ENCODE measurements at regions of chr16 and their contacts with region 1.

Region 1: DNA sequence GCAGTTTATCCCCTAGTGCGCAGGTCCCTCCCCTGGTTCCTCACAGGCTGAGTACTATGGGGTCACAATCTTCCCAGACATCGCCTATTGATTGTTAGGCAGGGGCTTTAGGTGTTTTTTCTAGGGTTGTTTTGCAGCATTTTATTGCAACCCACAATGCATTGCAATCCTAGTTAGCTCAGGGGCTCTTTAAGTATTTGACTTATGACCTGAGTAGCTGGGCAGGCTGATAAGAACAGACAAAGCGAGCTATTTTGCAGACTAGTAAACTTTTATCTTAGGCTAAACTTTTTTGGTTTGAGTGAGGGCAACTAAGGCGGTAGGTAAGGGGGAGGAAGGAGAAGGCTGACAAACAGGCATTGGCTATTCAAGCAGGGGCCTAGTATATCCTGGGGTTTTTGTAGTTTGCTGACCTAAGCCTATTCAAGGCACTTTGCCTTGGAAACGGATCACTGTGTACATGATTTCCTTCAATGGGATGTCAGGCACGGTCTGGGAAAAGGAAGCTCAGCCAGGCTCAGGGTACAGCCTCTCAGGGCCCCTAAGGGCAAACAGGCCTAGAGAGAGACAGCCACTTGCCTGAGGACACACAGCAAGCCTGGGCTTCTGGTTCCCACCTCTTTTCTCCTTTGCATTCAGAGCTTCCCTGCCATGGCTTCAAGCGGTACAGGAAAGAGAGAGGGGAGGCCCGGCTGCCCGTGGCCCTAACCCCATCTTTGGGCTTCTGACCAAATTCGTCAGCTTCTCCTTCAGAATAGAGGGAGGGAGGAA is 6.4 kb downstream of the DRC7 start:
- DNase-seq: peak; percentile 81
- ATAC-seq: peak; percentile 58
- H3K4me3 ChIP-seq: peak overlapping the region in 2 of 3 experiments; percentile 11 to 49; a peak in 3 of 6 replicates
- H3K27ac ChIP-seq: peak overlapping the region; percentile 72
- H3K4me1 ChIP-seq: peaks cover 87% of the 10 kb centered on the region
- H3K27me3 ChIP-seq: no peaks in the 10 kb centered on the region
- CTCF ChIP-seq: no peak
- EP300 ChIP-seq: no peak
- POLR2A ChIP-seq: no peak
- RAD21 ChIP-seq: no peak

Region 2: DNA sequence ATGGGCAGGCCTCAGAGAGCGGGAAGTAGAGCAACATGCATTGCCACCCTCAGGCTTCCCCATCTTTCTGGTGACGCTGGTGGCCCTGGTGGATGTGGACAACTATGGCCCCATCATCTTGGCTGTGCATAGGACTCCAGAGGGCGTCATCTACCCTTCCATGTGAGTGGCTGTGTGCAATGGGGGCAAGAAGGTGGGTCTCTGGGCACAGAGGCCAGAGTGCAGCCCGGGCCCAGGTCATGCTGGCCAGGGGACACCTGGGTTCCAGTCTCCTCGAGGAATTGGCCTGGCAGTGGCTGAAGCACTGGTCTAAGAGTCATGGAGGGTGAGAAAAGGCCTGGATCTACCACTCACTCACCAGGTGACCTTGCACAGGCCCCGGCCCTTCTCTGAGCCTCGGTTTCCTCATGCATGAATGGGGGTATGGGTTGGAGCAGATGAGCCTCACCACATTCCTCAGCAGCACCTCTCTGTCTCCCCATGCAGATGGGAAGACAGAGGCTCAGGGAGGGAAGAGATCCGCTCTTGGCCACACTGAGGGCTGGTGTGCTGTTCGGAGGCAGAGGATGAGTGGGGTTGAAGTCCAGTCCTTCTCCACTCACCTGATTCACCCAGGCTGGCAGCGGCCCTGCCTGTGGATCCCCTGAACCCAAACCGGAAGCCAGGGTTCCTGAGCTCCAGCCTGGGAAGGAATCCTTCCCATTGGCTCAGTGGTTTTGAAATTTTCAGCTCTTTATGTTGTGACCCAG is 40.1 kb before region 1 on chr16:
- CTCF ChIA-PET with region 1: no interaction called
- POLR2A ChIA-PET with region 1: interaction called, 9 read pairs
- in situ Hi-C with region 1: no loop called
- intact Hi-C with region 1: loop called (anchors 2 kb)
- DNase-seq: peak; percentile 59
- ATAC-seq: peak; percentile 86
- H3K4me3 ChIP-seq: peak overlapping the region in 1 of 3 experiments; percentile 17; a peak in 1 of 6 replicates
- H3K27ac ChIP-seq: peak overlapping the region; percentile 52
- H3K4me1 ChIP-seq: peaks cover 36% of the 10 kb centered on the region
- H3K27me3 ChIP-seq: no peaks in the 10 kb centered on the region
- CTCF ChIP-seq: peak; percentile 85
- EP300 ChIP-seq: no peak
- POLR2A ChIP-seq: 0 out of 4 replicates have a peak, but pooled peaks of 1 of the 2 experiments have one; percentile 41
- RAD21 ChIP-seq: peak; percentile 54

Region 3: DNA sequence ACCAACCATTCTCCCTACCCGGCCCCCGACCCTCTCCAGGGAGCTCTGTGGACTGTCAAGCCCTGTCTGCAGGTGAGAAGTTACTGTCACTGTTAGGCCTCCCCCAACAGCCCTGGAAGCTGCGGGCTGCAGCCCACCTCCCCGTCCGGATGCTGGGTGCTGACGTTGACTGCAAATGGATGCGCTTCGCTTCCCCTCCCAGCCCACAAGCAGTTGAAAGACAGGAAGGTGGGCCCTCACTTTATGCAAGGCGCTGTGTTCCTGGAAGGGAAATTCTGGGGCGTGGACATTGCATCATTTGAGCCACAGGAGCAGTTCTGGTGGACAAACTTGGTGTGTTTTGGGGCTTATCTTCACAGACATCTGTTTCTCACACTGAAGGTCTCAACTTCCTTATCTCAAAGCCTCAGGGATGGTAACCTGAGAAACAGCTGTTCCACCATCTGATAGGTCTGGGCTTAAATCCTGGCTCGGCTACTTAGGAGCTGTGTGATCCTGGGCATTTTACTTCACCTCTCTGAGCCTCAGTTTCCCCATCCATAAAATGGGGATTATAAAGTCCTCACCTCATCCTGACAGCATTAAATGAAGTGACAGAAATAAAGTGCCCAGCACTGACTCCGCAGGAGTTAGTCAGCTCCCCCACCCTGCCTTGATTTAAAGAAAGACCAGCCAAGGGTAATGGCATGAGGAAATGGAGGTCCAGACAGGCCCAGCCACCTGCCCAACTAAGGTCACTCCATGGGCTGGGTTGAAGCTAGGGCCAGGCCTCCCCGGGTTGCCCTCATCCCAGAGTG is 11.0 kb before region 1 on chr16:
- CTCF ChIA-PET with region 1: no interaction called
- POLR2A ChIA-PET with region 1: interaction called, 42 read pairs
- in situ Hi-C with region 1: no loop called
- intact Hi-C with region 1: no loop called
- DNase-seq: no peak
- ATAC-seq: no peak
- H3K4me3 ChIP-seq: no peak overlapping the region
- H3K27ac ChIP-seq: no peak overlapping the region
- H3K4me1 ChIP-seq: peaks cover 73% of the 10 kb centered on the region
- H3K27me3 ChIP-seq: no peaks in the 10 kb centered on the region
- CTCF ChIP-seq: no peak
- EP300 ChIP-seq: no peak
- POLR2A ChIP-seq: no peak
- RAD21 ChIP-seq: no peak

Region 4: GRCh38 chr16:57775661-57776469 is 74.9 kb after region 1 on chr16:
- CTCF ChIA-PET with region 1: no interaction called
- POLR2A ChIA-PET with region 1: no interaction called
- in situ Hi-C with region 1: no loop called
- intact Hi-C with region 1: no loop called
- DNase-seq: peak; percentile 52
- ATAC-seq: peak; percentile 88
- H3K4me3 ChIP-seq: no peak overlapping the region
- H3K27ac ChIP-seq: no peak overlapping the region
- H3K4me1 ChIP-seq: peaks cover 15% of the 10 kb centered on the region
- H3K27me3 ChIP-seq: no peaks in the 10 kb centered on the region
- CTCF ChIP-seq: peak; percentile 63
- EP300 ChIP-seq: no peak
- POLR2A ChIP-seq: no peak
- RAD21 ChIP-seq: peak; percentile 87

Measured in HepG2 (cell line).